ENCODE measurements at regions of chr11 and their contacts with region 1.

Region 1: GRCh38 chr11:27485930-27486773 is 13.6 kb upstream of the LGR4 start:
- DNase-seq: no peak
- H3K4me3 ChIP-seq: no peak overlapping the region
- H3K27ac ChIP-seq: no peak overlapping the region
- H3K27me3 ChIP-seq: no peaks in the 10 kb centered on the region
- CTCF ChIP-seq: peak; percentile 95

Region 2: GRCh38 chr11:26820739-26821138 is 665.4 kb before region 1 on chr11:
- CTCF ChIA-PET with region 1: no interaction called
- POLR2A ChIA-PET with region 1: no interaction called
- DNase-seq: peak; percentile 15
- H3K4me3 ChIP-seq: no peak overlapping the region
- H3K27ac ChIP-seq: no peak overlapping the region
- H3K27me3 ChIP-seq: no peaks in the 10 kb centered on the region
- CTCF ChIP-seq: no peak

Region 3: GRCh38 chr11:27055118-27055557 is 431.0 kb before region 1 on chr11:
- CTCF ChIA-PET with region 1: no interaction called
- POLR2A ChIA-PET with region 1: no interaction called
- DNase-seq: no peak
- H3K4me3 ChIP-seq: no peak overlapping the region
- H3K27ac ChIP-seq: no peak overlapping the region
- H3K27me3 ChIP-seq: no peaks in the 10 kb centered on the region
- CTCF ChIP-seq: no peak

Region 4: GRCh38 chr11:27196203-27196897 is 289.8 kb before region 1 on chr11:
- CTCF ChIA-PET with region 1: interaction called, 21 read pairs
- POLR2A ChIA-PET with region 1: no interaction called
- DNase-seq: no peak
- H3K4me3 ChIP-seq: no peak overlapping the region
- H3K27ac ChIP-seq: no peak overlapping the region
- H3K27me3 ChIP-seq: no peaks in the 10 kb centered on the region
- CTCF ChIP-seq: no peak

Region 5: GRCh38 chr11:27209562-27210005 is 276.6 kb before region 1 on chr11:
- CTCF ChIA-PET with region 1: interaction called, 11 read pairs
- POLR2A ChIA-PET with region 1: no interaction called
- DNase-seq: no peak
- H3K4me3 ChIP-seq: no peak overlapping the region
- H3K27ac ChIP-seq: no peak overlapping the region
- H3K27me3 ChIP-seq: no peaks in the 10 kb centered on the region
- CTCF ChIP-seq: no peak

Region 6: DNA sequence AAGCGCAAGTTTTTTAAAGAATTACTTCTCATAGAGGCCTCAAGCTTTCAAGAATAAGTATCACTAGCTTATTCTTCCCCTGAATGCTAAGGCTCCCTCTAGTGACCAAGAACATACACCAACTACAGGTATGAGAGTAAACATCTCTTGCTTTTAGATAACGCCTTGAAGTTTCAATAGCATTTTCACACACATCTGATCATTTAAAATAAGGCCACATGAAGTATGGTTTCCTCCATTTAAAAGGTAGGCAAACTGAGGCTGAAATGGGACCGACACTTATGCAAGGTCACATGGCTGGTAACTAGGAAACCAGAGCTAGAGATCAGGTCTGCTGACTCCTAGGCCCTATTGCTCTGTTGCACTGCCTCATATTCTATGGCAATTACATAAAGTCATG is 189.7 kb before region 1 on chr11:
- CTCF ChIA-PET with region 1: interaction called, 87 read pairs
- POLR2A ChIA-PET with region 1: no interaction called
- DNase-seq: no peak
- H3K4me3 ChIP-seq: no peak overlapping the region
- H3K27ac ChIP-seq: no peak overlapping the region
- H3K27me3 ChIP-seq: no peaks in the 10 kb centered on the region
- CTCF ChIP-seq: peak; percentile 87

Region 7: DNA sequence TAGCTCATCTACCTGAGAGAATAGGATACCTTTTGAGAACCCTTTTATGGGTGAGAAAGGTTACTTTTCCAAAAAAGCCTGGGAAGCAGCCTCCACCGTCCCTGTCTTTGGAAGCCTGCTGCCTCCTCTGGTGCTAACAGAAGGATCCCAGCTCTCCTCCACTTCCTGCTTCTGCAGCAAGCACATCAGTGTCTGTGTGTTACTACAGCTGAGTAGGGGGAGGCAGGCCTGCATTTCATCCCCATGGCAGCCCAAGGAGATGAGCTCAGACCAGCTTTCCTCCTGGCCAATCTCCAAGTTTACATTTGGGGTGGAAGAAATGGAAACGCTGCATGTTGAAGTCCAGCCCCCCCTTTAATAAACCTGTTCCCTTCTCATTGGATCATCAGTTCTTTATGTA is 115.8 kb before region 1 on chr11:
- CTCF ChIA-PET with region 1: interaction called, 10 read pairs
- POLR2A ChIA-PET with region 1: no interaction called
- DNase-seq: peak; percentile 63
- H3K4me3 ChIP-seq: no peak overlapping the region
- H3K27ac ChIP-seq: no peak overlapping the region
- H3K27me3 ChIP-seq: no peaks in the 10 kb centered on the region
- CTCF ChIP-seq: no peak

Region 8: GRCh38 chr11:27472398-27473016 is 13.6 kb before region 1 on chr11 and contains the start of gene LGR4:
- CTCF ChIA-PET with region 1: interaction called, 25 read pairs
- POLR2A ChIA-PET with region 1: no interaction called
- DNase-seq: peak; percentile 74
- H3K4me3 ChIP-seq: peak within 1 kb of the TSS; percentile 75
- H3K27ac ChIP-seq: peak within 1 kb of the TSS; percentile 34
- H3K27me3 ChIP-seq: no peaks in the 10 kb centered on the region
- CTCF ChIP-seq: no peak
- polyA plus RNA-seq, gene LGR4: 4.2 and 5.8 TPM in 2 replicates

Region 9: DNA sequence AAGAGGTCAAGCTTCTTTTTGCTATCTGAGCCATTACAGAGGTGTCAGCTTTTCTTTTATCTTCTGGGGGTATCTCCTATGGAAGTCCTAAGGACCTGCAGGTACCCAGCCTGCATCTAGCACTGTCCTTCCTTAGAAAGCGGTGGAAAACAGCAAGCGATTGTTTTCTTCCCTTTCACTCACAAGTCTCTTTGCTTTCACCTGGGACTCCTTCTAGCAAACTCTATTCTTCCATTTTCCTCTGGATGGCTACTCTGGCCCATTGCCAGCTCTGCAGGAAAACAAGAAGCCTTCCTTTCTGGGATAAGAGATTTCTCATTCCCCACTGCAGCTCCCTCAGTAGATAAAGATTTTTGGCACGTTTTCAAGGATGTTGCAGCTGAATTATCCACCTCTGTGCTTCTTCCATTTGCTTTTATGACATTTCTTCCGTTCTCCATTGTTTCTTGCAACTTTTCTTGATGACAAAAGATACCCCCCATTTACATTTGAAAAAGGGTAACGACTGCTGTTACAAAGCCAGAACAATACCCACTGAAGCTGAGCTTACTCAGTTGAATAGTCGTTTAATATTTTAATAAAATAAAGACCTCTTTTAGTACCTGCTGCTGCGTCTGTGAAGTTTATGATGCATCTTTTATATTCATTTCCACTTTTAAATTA is 254.3 kb after region 1 on chr11:
- CTCF ChIA-PET with region 1: no interaction called
- POLR2A ChIA-PET with region 1: no interaction called
- DNase-seq: no peak
- H3K4me3 ChIP-seq: no peak overlapping the region
- H3K27ac ChIP-seq: no peak overlapping the region
- H3K27me3 ChIP-seq: no peaks in the 10 kb centered on the region
- CTCF ChIP-seq: no peak

Measured in AG04450 (cell line).